ENCODE measurements at regions of chr9 and their contacts with region 1.

Region 1: DNA sequence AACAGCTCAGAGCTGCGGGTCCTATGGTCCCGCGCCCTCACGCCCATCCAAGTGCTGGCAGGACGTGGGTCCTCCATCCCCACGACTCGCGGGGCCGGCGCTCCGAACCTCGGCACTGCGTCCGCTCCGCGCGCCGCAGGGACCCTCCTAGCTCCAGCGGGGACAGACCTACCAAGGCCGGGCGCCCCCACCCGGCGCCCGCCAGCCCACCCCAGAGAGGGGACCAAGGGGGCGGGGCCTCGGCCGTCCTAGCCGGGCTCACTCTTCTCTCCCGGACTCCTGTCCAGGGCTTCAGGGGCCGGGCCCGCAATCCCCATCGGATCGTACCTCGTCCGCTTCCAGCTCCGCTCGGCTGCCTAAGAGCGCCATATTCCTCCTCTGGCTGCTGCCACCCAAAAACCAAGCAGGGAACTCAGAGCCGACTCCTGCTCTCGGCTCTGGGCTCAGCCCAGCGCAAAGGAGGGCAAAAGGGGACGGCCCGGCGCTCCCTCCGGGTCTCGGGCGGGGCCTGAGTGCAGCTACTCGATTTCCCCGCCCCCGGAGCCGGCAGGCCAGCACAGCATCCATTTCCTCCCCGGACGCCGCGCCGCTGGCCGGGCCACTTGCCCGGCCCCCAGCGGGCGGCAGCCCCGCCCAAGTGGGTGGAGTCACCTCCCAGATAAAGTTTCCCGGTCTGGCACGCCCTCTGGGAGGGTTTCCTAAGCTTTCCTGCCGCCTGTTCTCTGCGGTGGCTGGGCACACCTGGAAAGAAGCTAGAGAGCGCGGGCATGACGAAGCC is at the start of gene TTC39B:
- DNase-seq: peak; percentile 34 to 88 (median 53)
- ATAC-seq: peak; percentile 87
- H3K4me3 ChIP-seq: peak within 1 kb of the TSS; percentile 86
- H3K4me3 Mint-ChIP-seq: peak within 1 kb of the TSS; percentile 89 to 99 (median 97)
- H3K27ac ChIP-seq: peak within 1 kb of the TSS; percentile 81
- H3K27ac Mint-ChIP-seq: peak within 1 kb of the TSS; percentile 84 to 97 (median 95)
- H3K4me1 ChIP-seq: peaks cover 25 to 44% of the 10 kb centered on the region in 2 donors
- H3K4me1 Mint-ChIP-seq: peaks cover 37 to 66% (median 61%) of the 10 kb centered on the region in 7 donors
- H3K27me3 ChIP-seq: no peaks in the 10 kb centered on the region
- H3K27me3 Mint-ChIP-seq: no peaks in the 10 kb centered on the region
- total RNA-seq, gene TTC39B: 29.1 to 49.3 (median 42.8) TPM

Region 2: DNA sequence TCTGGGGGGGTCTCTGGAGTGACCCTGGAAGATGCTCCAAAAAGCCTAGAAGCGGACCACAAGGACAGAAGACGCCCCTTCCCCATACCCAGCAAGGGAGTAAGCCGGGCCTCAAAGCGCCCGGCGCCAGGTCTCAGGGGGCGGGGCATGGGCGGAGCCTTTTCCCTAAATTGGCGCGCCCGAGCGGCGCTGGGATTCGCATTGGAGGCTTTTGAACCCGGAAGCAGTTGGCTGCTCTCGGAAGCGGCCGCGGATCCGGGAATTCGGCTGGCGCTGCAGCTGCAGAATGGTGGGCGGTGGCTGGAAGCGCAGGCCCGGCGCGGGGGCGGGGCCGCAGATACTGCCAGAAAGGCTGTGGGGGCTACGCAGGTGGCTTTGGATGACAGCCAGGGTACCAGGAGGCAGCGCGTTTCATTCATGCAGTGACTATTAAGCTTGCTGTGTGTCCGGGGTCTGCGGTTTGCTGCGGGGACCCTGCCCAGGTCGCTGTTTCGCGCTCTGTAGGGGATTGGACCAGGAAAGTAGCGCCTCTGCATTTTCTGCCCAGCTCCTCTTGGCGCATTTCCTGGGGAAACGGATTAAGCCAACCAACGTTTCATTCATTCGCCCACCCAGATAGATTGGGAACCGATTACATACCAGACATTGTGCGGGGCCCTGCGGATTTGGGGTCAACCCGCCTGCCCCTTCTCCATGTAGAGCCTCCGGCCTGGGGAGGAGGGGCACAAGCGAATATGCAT is 313.7 kb before region 1 on chr9:
- CTCF ChIA-PET with region 1: no interaction called
- POLR2A ChIA-PET with region 1: no interaction called
- intact Hi-C with region 1: loop called in 1 of 2 experiments (anchors 10 kb)
- DNase-seq: peak; percentile 9 to 50 (median 27)
- ATAC-seq: peak; percentile 45
- H3K4me3 ChIP-seq: peak overlapping the region; percentile 70
- H3K4me3 Mint-ChIP-seq: peak overlapping the region; percentile 79 to 92 (median 86)
- H3K27ac ChIP-seq: peak overlapping the region; percentile 61
- H3K27ac Mint-ChIP-seq: peak overlapping the region; percentile 75 to 94 (median 84)
- H3K4me1 ChIP-seq: peaks cover 14 to 18% of the 10 kb centered on the region in 2 donors
- H3K4me1 Mint-ChIP-seq: peaks cover 31 to 44% (median 40%) of the 10 kb centered on the region in 7 donors
- H3K27me3 ChIP-seq: no peaks in the 10 kb centered on the region
- H3K27me3 Mint-ChIP-seq: peaks cover 0 to 3% (median 0%) of the 10 kb centered on the region in 5 donors

Region 3: DNA sequence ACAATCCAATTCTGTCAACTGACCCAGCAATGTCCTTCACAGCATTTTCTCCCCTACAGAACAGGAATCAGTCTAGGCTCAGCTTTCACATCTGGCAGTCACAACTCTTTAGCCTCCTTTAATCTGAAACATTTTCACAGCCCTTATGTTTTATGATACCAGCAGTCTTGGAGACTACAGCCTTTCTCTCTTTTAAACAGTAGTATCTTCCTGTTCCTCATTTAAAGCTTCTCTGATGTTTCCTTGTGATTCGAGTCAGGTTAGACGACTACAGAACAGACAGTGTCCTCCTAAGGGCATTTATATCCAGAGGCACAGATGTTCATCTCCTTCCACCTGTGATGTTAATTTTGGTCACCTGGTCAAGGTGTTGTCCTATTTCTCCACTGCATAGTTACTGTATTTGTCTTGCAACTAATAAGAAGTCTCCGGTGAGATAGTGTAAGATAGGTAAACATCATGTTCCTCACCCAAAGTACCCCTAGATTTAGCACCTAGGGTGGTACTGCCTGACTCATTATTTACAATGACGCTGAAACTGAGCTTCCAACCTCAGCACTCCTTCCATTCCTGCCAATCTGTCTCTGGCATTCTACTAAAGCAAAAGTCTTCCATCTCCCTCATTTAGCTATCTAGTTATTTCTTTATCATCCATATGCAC is 20.7 kb before region 1 on chr9:
- CTCF ChIA-PET with region 1: interaction called, 3 read pairs
- POLR2A ChIA-PET with region 1: interaction called, 176 read pairs
- intact Hi-C with region 1: loop called in 1 of 2 experiments (anchors 1 kb)
- DNase-seq: no peak
- ATAC-seq: no peak
- H3K4me3 ChIP-seq: no peak overlapping the region
- H3K4me3 Mint-ChIP-seq: peak overlapping the region in 5 of 10 donors; percentile 1 to 41 (median 11)
- H3K27ac ChIP-seq: no peak overlapping the region
- H3K27ac Mint-ChIP-seq: peak overlapping the region in 8 of 9 donors; percentile 3 to 99 (median 48)
- H3K4me1 ChIP-seq: peaks cover 0 to 23% of the 10 kb centered on the region in 2 donors
- H3K4me1 Mint-ChIP-seq: peaks cover 19 to 81% (median 63%) of the 10 kb centered on the region in 7 donors
- H3K27me3 ChIP-seq: no peaks in the 10 kb centered on the region
- H3K27me3 Mint-ChIP-seq: no peaks in the 10 kb centered on the region

Region 4: GRCh38 chr9:15295761-15296405 is 11.1 kb before region 1 on chr9:
- CTCF ChIA-PET with region 1: interaction called, 36 read pairs
- POLR2A ChIA-PET with region 1: interaction called, 176 read pairs
- intact Hi-C with region 1: loop called (anchors 1 kb)
- DNase-seq: peak in 7 of 9 donors; percentile 37 to 72 (median 53)
- ATAC-seq: peak; percentile 59
- H3K4me3 ChIP-seq: peak overlapping the region; percentile 41
- H3K4me3 Mint-ChIP-seq: peak overlapping the region; percentile 70 to 98 (median 84)
- H3K27ac ChIP-seq: peak overlapping the region; percentile 88
- H3K27ac Mint-ChIP-seq: peak overlapping the region; percentile 96 to 99 (median 98)
- H3K4me1 ChIP-seq: peaks cover 71 to 82% of the 10 kb centered on the region in 2 donors
- H3K4me1 Mint-ChIP-seq: peaks cover 61 to 93% (median 88%) of the 10 kb centered on the region in 7 donors
- H3K27me3 ChIP-seq: no peaks in the 10 kb centered on the region
- H3K27me3 Mint-ChIP-seq: no peaks in the 10 kb centered on the region

Region 5: GRCh38 chr9:15317836-15318235 is 10.9 kb after region 1 on chr9:
- CTCF ChIA-PET with region 1: no interaction called
- POLR2A ChIA-PET with region 1: interaction called, 3 read pairs
- intact Hi-C with region 1: loop called in 1 of 2 experiments (anchors 1 kb)
- DNase-seq: no peak
- ATAC-seq: no peak
- H3K4me3 ChIP-seq: no peak overlapping the region
- H3K4me3 Mint-ChIP-seq: no peak overlapping the region
- H3K27ac ChIP-seq: no peak overlapping the region
- H3K27ac Mint-ChIP-seq: no peak overlapping the region
- H3K4me1 ChIP-seq: no peaks in the 10 kb centered on the region
- H3K4me1 Mint-ChIP-seq: peaks cover 0 to 11% (median 1%) of the 10 kb centered on the region in 7 donors
- H3K27me3 ChIP-seq: no peaks in the 10 kb centered on the region
- H3K27me3 Mint-ChIP-seq: peaks cover 0 to 5% (median 0%) of the 10 kb centered on the region in 5 donors

Region 6: GRCh38 chr9:15461601-15462000 is 154.7 kb after region 1 on chr9:
- CTCF ChIA-PET with region 1: no interaction called
- POLR2A ChIA-PET with region 1: no interaction called
- intact Hi-C with region 1: no loop called
- DNase-seq: no peak
- ATAC-seq: no peak
- H3K4me3 ChIP-seq: no peak overlapping the region
- H3K4me3 Mint-ChIP-seq: no peak overlapping the region
- H3K27ac ChIP-seq: no peak overlapping the region
- H3K27ac Mint-ChIP-seq: peak overlapping the region in 2 of 9 donors; percentile 25 to 54
- H3K4me1 ChIP-seq: no peaks in the 10 kb centered on the region
- H3K4me1 Mint-ChIP-seq: peaks cover 0 to 3% (median under 1%) of the 10 kb centered on the region in 7 donors
- H3K27me3 ChIP-seq: no peaks in the 10 kb centered on the region
- H3K27me3 Mint-ChIP-seq: no peaks in the 10 kb centered on the region

Region 7: GRCh38 chr9:15670884-15671283 is 363.9 kb after region 1 on chr9:
- CTCF ChIA-PET with region 1: no interaction called
- POLR2A ChIA-PET with region 1: no interaction called
- intact Hi-C with region 1: no loop called
- DNase-seq: no peak
- ATAC-seq: no peak
- H3K4me3 ChIP-seq: no peak overlapping the region
- H3K4me3 Mint-ChIP-seq: no peak overlapping the region
- H3K27ac ChIP-seq: no peak overlapping the region
- H3K27ac Mint-ChIP-seq: no peak overlapping the region
- H3K4me1 ChIP-seq: no peaks in the 10 kb centered on the region
- H3K4me1 Mint-ChIP-seq: no peaks in the 10 kb centered on the region
- H3K27me3 ChIP-seq: no peaks in the 10 kb centered on the region
- H3K27me3 Mint-ChIP-seq: no peaks in the 10 kb centered on the region

Measured in naive thymus-derived CD4-positive, alpha-beta T cell (primary cell).